ENCODE measurements at regions of chr11 and their contacts with region 1.

Region 1: GRCh38 chr11:94623120-94623735 is 56.1 kb downstream of the PIWIL4 start:
- DNase-seq: peak; percentile 43 to 78
- H3K4me3 ChIP-seq: no peak overlapping the region
- H3K27ac ChIP-seq: no peak overlapping the region
- H3K4me1 ChIP-seq: no peaks in the 10 kb centered on the region
- H3K27me3 ChIP-seq: no peaks in the 10 kb centered on the region; a peak in 1 of 7 replicates
- CTCF ChIP-seq: peak; percentile 27 to 97 (median 88)
- EP300 ChIP-seq: no peak
- POLR2A ChIP-seq: no peak
- RAD21 ChIP-seq: peak; percentile 100

Region 2: GRCh38 chr11:94376841-94377240 is 246.4 kb before region 1 on chr11:
- CTCF ChIA-PET with region 1: no interaction called
- POLR2A ChIA-PET with region 1: no interaction called
- DNase-seq: no peak
- H3K4me3 ChIP-seq: no peak overlapping the region
- H3K27ac ChIP-seq: no peak overlapping the region
- H3K4me1 ChIP-seq: no peaks in the 10 kb centered on the region
- H3K27me3 ChIP-seq: no peaks in the 10 kb centered on the region
- CTCF ChIP-seq: no peak
- EP300 ChIP-seq: no peak
- POLR2A ChIP-seq: no peak
- RAD21 ChIP-seq: no peak

Region 3: DNA sequence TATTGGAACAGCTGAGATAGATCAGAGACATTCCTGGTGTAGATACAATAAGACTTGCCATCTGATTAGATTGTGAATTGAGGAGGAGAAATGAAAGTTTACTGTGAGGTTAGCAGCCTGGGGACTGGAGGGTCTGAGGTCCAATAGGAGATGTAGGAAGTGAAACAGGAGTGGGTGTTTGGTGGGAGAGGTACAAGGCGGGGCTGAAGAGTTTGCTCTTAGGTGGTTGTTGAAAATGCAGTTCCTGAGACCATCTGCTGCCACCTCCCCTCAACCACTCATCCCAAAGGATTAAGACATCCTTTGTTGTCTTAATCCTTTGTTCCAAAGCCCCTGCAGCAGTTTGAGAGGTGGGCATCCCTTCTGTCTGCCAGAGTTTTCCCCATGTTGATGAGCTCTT is 41.3 kb before region 1 on chr11:
- CTCF ChIA-PET with region 1: no interaction called
- POLR2A ChIA-PET with region 1: no interaction called
- DNase-seq: no peak
- H3K4me3 ChIP-seq: no peak overlapping the region
- H3K27ac ChIP-seq: no peak overlapping the region
- H3K4me1 ChIP-seq: no peaks in the 10 kb centered on the region
- H3K27me3 ChIP-seq: no peaks in the 10 kb centered on the region
- CTCF ChIP-seq: no peak
- EP300 ChIP-seq: no peak
- POLR2A ChIP-seq: no peak
- RAD21 ChIP-seq: no peak

Region 4: GRCh38 chr11:94613120-94613519 is 10.1 kb before region 1 on chr11:
- CTCF ChIA-PET with region 1: interaction called, 17 read pairs
- POLR2A ChIA-PET with region 1: no interaction called
- DNase-seq: no peak
- H3K4me3 ChIP-seq: no peak overlapping the region
- H3K27ac ChIP-seq: no peak overlapping the region
- H3K4me1 ChIP-seq: no peaks in the 10 kb centered on the region
- H3K27me3 ChIP-seq: no peaks in the 10 kb centered on the region
- CTCF ChIP-seq: no peak
- EP300 ChIP-seq: no peak
- POLR2A ChIP-seq: no peak
- RAD21 ChIP-seq: no peak

Region 5: DNA sequence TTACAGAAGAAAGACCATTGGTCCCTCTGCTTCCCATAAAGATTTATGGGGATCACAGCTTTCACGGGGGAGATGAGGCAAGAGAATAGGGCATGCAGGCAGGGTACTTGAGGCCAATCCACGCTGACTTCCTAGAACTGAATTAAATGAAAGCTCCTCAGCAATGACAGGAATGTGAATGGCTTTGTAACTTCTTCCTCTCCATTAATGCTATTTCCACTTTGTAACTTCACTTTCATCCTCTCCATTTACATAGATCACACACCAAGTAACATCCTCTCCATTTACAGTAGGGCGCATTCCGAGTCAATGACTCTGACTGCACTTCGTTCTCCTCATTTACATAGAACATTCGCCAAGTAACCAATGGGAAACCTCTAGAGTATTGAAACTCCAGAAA is 33.7 kb after region 1 on chr11:
- CTCF ChIA-PET with region 1: interaction called, 12 read pairs
- POLR2A ChIA-PET with region 1: interaction called, 36 read pairs
- DNase-seq: peak in 1 of 2 experiments; percentile 25
- H3K4me3 ChIP-seq: no peak overlapping the region
- H3K27ac ChIP-seq: no peak overlapping the region
- H3K4me1 ChIP-seq: peaks cover 0 to 31% (median 15%) of the 10 kb centered on the region in 4 experiments; a peak in 6 of 7 replicates
- H3K27me3 ChIP-seq: no peaks in the 10 kb centered on the region
- CTCF ChIP-seq: no peak
- EP300 ChIP-seq: peak in 1 of 2 experiments; percentile 65; a peak in 1 of 3 replicates
- POLR2A ChIP-seq: peak; percentile 4 to 28; a peak in 1 of 3 replicates
- RAD21 ChIP-seq: no peak

Region 6: DNA sequence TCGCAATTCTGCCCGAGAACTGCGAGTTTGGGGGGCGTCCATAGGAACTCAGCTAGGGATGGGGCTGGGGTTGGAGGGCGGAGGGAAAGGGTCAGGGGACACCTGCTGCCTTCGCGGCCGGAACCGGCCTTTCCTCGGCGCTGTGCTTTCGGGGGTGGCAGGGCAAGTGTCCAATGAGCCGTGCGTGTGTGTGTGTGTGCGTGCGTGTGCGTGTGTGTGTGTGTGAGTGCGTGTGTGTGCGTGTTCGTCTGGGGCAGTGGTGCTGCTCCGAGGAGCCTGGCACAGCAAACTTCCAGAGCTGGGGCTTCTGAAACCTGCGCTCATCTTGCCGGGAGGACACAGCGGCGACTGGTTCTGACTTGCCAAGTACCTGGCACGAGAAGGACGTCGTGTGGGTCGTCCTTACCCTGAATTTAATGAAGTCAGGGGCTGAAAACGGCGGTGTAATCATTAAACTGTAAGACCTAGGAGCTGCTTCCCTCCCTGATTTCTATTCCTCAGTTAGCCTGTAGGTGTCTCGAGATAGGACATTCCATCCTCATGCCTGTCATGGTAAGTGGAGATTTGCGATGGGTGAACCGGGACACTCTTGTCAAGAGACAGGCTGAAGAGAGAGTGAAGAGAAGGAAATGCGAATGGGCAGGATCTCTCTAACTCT is 117.9 kb after region 1 on chr11:
- CTCF ChIA-PET with region 1: interaction called, 61 read pairs
- POLR2A ChIA-PET with region 1: no interaction called
- DNase-seq: peak in 1 of 2 experiments; percentile 62
- H3K4me3 ChIP-seq: peak overlapping the region; percentile 61 to 69 (median 67)
- H3K27ac ChIP-seq: no peak overlapping the region
- H3K4me1 ChIP-seq: peaks cover 0 to 17% (median 7%) of the 10 kb centered on the region in 4 experiments; a peak in 6 of 7 replicates
- H3K27me3 ChIP-seq: peaks cover 0 to 31% (median 19%) of the 10 kb centered on the region in 4 experiments; a peak in 6 of 7 replicates
- CTCF ChIP-seq: peak in 2 of 3 experiments; percentile 38 to 66; a peak in 2 of 4 replicates
- EP300 ChIP-seq: no peak
- POLR2A ChIP-seq: no peak
- RAD21 ChIP-seq: peak; percentile 43 to 49

Region 7: DNA sequence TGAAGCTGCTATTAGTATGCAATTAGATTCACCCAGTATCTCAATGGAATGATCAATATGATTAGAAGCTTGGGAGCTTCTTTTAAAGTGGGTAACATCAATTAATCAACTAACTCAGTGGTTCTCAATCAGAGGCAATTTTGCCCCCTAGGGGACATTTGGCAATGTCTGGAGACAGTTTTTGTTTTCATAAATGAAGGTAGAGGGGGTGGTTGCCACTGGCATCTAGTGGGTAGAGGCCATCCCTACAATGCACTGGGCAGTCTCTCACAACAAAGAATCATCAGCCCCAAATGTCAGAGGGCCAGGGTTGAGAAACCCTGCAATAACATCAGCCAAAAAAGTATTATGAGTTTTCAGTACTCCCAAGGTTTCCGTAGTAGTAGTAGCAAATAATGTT is 139.0 kb after region 1 on chr11:
- CTCF ChIA-PET with region 1: interaction called, 24 read pairs
- POLR2A ChIA-PET with region 1: no interaction called
- DNase-seq: no peak
- H3K4me3 ChIP-seq: no peak overlapping the region
- H3K27ac ChIP-seq: no peak overlapping the region
- H3K4me1 ChIP-seq: peaks cover 0 to 12% (median 6%) of the 10 kb centered on the region in 4 experiments; a peak in 5 of 7 replicates
- H3K27me3 ChIP-seq: peaks cover 8 to 29% (median 25%) of the 10 kb centered on the region in 4 experiments
- CTCF ChIP-seq: peak in 2 of 3 experiments; percentile 49 to 71; a peak in 3 of 4 replicates
- EP300 ChIP-seq: no peak
- POLR2A ChIP-seq: no peak
- RAD21 ChIP-seq: peak; percentile 65 to 71

Region 8: DNA sequence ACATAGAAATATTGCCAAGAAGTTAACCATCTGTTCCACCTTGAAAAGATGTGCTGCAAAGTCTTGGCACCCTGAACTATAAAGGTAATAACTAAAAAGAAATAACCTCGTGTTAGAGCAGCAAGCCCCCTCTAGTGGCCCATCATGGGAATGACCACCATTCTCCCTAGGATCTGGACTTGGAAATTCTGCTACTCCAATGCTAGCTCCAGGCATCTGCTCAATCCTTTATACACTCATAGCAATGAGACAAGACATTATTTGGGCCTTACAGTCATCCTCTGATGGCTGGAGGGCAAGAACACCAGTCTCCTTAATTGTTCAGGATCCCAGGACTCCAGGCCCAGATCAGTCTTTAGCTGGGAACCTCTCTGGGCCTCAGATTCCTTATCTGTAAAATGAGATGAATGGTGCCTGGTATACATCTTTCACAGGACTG is 274.1 kb after region 1 on chr11:
- CTCF ChIA-PET with region 1: interaction called, 67 read pairs
- POLR2A ChIA-PET with region 1: interaction called, 3 read pairs
- DNase-seq: peak in 1 of 2 experiments; percentile 73
- H3K4me3 ChIP-seq: no peak overlapping the region
- H3K27ac ChIP-seq: no peak overlapping the region
- H3K4me1 ChIP-seq: no peaks in the 10 kb centered on the region
- H3K27me3 ChIP-seq: no peaks in the 10 kb centered on the region
- CTCF ChIP-seq: peak; percentile 35 to 82 (median 82)
- EP300 ChIP-seq: no peak
- POLR2A ChIP-seq: no peak
- RAD21 ChIP-seq: peak; percentile 85 to 87

Measured in H1 (cell line).